PC-3 (cell line): ENCODE measurements at regions of chr4 and their contacts with region 1.

Region 1: DNA sequence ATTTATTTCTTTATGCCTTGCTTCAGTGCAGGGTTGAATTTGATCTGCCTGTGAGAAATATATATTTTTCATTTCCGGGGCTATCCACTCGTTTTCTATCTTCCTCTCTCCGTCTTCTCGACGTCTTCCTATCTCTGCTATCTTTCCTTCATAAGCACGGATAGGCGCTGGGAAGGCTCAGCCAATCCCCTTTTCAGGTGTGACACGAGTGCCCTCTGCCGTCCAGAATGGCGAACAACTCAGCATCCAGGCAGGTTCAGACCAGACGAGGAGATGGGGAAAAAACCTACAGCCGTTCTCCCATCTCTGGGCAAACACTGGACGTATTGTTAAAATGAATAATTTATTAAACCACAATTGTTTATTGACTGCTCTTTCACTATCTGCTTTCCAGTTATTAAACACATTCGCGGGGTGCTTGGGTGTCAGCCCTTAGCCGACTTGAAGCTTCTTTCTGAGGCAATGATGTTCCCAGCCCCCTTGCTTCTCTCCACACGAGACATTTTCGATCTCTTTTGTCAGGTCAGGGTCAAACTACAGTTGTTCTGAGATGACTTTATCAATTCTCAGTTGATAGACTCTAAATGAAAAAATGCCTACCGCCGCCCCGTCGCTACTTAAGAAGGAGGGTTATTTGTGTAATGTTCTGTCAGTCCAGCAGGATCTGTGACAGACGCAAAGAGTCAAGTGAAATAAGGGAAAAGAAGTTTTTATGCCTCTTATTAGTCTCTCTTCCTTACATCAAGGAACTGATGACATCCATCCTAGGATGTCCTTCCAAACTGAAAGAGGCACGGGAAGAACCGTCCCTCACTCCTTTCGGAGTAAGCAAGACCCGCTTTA is 96.3 kb upstream of the NOCT start:
- DNase-seq: peak; percentile 84
- ATAC-seq: peak; percentile 98
- H3K4me3 ChIP-seq: peak overlapping the region; percentile 59
- H3K27ac ChIP-seq: no peak overlapping the region
- H3K4me1 ChIP-seq: no peaks in the 10 kb centered on the region
- H3K27me3 ChIP-seq: no peaks in the 10 kb centered on the region
- CTCF ChIP-seq: peak; percentile 80

Region 2: DNA sequence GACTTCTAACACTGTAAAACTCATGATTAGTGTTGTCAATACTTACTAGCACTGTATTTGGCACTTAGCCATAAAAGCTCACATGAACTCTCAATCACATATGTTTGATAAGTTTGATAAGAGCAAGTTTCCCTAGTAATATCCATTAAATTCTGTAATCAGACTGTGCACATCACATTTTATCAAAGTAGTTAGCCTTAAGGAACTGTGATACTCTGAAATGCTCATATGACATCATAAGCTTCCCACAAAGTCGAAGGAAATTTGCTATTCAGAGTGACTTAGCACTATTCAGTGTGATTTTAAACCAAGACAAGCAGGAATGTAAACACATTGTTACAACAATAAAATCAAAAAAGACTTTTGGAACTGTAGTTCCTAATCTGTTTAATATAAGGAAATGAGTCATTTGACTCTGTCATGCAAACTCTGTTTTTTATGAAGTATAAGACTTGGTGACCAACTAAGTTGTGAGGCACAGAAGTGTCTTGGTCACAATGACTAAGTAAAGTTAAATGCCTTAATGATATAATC is 683.8 kb before region 1 on chr4:
- CTCF ChIA-PET with region 1: no interaction called
- POLR2A ChIA-PET with region 1: no interaction called
- intact Hi-C with region 1: loop called (anchors 10 kb)
- DNase-seq: peak; percentile 86
- ATAC-seq: peak; percentile 87
- H3K4me3 ChIP-seq: 0 out of 2 replicates have a peak overlapping the region, but pooled peaks have one; percentile 22
- H3K27ac ChIP-seq: peak overlapping the region; percentile 94
- H3K4me1 ChIP-seq: peaks cover 42% of the 10 kb centered on the region
- H3K27me3 ChIP-seq: no peaks in the 10 kb centered on the region
- CTCF ChIP-seq: no peak

Region 3: GRCh38 chr4:138789796-138790195 is 129.5 kb before region 1 on chr4:
- CTCF ChIA-PET with region 1: no interaction called
- POLR2A ChIA-PET with region 1: no interaction called
- intact Hi-C with region 1: no loop called
- DNase-seq: no peak
- ATAC-seq: no peak
- H3K4me3 ChIP-seq: no peak overlapping the region
- H3K27ac ChIP-seq: no peak overlapping the region
- H3K4me1 ChIP-seq: no peaks in the 10 kb centered on the region
- H3K27me3 ChIP-seq: 0 out of 2 replicates have a peak, but pooled peaks cover 4% of the 10 kb centered on the region
- CTCF ChIP-seq: no peak

Region 4: GRCh38 chr4:138870737-138871554 is 48.4 kb before region 1 on chr4:
- CTCF ChIA-PET with region 1: interaction called, 18 read pairs
- POLR2A ChIA-PET with region 1: no interaction called
- intact Hi-C with region 1: loop called (anchors 1 kb)
- DNase-seq: peak; percentile 80
- ATAC-seq: peak; percentile 67
- H3K4me3 ChIP-seq: no peak overlapping the region
- H3K27ac ChIP-seq: no peak overlapping the region
- H3K4me1 ChIP-seq: peaks cover 5% of the 10 kb centered on the region
- H3K27me3 ChIP-seq: no peaks in the 10 kb centered on the region
- CTCF ChIP-seq: peak; percentile 84

Region 5: DNA sequence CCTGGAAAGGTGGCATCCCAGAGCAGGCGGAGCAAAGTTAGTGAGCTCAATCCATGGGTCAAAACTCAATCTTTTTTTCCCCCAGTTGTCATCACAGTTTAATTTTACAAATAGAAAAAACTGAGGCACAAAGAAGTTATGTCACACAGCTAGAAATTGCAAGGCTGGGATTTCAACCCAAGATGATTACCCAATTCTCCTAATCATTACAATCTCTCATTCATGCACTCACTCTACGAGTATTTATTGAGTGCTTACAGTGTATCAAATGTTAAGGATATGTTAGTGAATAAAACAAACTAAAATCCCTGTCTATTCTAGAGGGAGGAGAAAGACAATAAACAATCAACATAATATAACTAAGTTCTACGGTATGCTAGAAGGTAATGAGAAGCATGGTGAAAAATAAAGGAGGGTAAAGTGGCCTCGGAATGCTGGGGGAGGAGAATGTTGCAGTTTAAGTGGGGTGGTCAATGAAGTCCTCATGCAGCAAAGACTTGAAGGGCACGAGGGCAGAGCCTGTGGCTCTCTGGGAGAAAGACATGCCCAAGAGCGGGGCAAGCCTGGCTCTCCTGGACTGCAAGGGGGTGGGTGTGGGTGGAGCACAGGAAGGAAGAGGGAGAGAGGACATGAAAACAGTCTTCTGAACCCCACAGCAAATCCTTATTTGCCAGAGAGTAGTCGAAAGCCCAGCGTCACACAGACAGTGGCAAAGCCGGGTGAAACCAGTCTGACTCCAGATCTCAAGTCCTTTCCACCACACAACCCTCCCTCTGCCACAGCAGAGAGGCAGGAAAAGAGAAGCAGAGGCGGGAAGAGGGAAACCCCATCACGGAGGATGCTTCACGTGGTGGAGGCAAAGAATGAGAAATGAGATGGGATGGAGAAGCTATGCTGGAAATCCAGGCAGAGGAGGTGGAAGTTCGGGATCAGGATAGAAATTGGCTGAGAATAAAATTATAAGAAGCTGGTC is 582.9 kb after region 1 on chr4:
- CTCF ChIA-PET with region 1: no interaction called
- POLR2A ChIA-PET with region 1: no interaction called
- intact Hi-C with region 1: no loop called
- DNase-seq: no peak
- ATAC-seq: no peak
- H3K4me3 ChIP-seq: no peak overlapping the region
- H3K27ac ChIP-seq: no peak overlapping the region
- H3K4me1 ChIP-seq: no peaks in the 10 kb centered on the region
- H3K27me3 ChIP-seq: no peaks in the 10 kb centered on the region
- CTCF ChIP-seq: no peak